ENCODE measurements at regions of chr10 and their contacts with region 1.

Region 1: DNA sequence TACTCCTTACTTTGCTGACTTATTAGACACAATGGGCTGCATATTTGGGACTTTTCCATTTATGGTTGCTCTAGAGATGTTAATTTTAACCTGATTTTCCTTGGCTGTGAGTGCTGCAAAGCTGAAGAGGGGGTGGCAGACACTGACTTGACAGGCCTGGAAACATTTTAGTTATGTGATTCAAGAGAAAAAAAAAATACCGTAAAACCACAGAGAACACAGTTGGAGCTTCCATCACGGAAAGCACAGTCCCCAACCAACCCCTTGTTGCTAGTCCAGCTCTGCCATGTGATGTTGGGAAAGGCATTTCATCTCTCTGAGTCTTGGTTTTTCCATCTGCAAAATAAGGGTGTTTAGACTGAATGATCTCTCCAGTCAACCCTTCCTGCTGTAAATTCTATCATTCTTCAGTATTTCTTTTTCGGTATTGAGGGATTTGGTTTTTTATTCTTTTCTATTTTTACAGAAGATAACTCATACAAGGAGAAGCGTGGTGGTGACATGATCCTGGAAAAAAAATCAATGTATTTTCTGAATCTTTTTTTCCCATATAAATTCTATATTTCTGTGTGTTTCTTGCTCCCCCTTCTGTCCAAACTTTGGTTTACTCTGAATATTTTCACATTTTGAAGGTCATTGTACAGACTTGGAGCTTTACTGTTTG is 246.1 kb downstream of the REEP3 start:
- DNase-seq: peak; percentile 71
- H3K4me3 ChIP-seq: no peak overlapping the region
- H3K27ac ChIP-seq: no peak overlapping the region
- H3K4me1 ChIP-seq: peaks cover 32% of the 10 kb centered on the region
- H3K27me3 ChIP-seq: no peaks in the 10 kb centered on the region
- CTCF ChIP-seq: peak; percentile 70

Region 2: GRCh38 chr10:62594093-62594520 is 1173.2 kb before region 1 on chr10:
- CTCF ChIA-PET with region 1: no interaction called
- POLR2A ChIA-PET with region 1: no interaction called
- intact Hi-C with region 1: loop called (anchors 10 kb)
- DNase-seq: peak; percentile 81
- H3K4me3 ChIP-seq: no peak overlapping the region
- H3K27ac ChIP-seq: no peak overlapping the region
- H3K4me1 ChIP-seq: peaks cover 6% of the 10 kb centered on the region
- H3K27me3 ChIP-seq: no peaks in the 10 kb centered on the region
- CTCF ChIP-seq: peak; percentile 97

Region 3: GRCh38 chr10:63346015-63346441 is 421.2 kb before region 1 on chr10:
- CTCF ChIA-PET with region 1: no interaction called
- POLR2A ChIA-PET with region 1: no interaction called
- intact Hi-C with region 1: no loop called
- DNase-seq: no peak
- H3K4me3 ChIP-seq: no peak overlapping the region
- H3K27ac ChIP-seq: no peak overlapping the region
- H3K4me1 ChIP-seq: no peaks in the 10 kb centered on the region
- H3K27me3 ChIP-seq: no peaks in the 10 kb centered on the region
- CTCF ChIP-seq: no peak

Region 4: DNA sequence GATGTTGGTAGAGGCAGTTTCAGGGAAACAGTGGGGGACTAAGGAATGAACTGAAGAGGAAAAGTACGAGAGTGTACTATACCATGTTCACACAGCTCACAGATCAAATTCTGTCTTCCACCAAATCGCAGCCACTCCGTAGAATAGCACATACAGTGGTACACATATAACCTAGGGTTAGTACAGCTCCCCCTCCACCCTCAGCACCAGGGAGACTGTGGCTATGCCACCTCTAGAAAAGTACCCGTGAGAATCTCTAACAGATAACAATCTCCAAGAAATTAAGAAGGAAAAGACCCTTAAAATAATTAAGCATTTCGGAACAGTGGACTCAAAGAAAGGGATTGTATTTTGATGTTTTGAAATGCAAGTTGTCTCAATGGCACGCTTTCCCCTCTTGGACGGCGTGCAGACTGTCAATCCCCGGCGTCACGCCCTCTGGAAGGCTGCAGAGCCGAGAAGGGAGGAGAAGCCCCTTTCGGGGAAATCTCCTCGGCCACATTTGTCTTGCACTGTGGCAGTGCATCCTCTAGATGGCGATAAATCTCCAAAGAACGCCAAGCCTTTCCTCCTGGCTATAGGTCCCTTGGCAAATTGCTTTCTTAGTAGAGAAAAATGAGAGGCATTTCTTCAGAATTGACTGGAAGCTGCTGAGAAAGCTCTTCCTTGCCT is 98.9 kb after region 1 on chr10:
- CTCF ChIA-PET with region 1: no interaction called
- POLR2A ChIA-PET with region 1: no interaction called
- intact Hi-C with region 1: no loop called
- DNase-seq: peak; percentile 89
- H3K4me3 ChIP-seq: peak overlapping the region; percentile 18
- H3K27ac ChIP-seq: no peak overlapping the region
- H3K4me1 ChIP-seq: peaks cover 5% of the 10 kb centered on the region
- H3K27me3 ChIP-seq: peaks cover 10% of the 10 kb centered on the region
- CTCF ChIP-seq: peak; percentile 87

Region 5: DNA sequence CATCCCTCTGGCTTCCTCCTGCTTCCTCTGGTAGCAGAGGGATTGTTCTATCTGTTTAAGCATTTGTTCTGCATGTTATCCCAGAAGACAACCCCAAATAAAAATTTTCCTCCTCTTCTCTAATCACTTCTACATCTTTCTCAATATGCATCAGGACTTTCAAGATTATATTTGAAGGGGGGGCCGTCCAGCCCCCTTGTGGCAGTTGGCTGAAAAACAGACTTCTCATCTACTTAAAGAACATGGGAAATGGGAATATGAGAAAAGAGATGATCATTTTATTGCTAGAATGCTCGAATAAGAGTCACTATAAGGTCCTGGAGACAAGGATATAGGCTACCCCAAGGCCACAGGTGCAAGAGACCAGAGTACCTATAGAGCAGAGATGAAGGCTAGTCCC is 219.9 kb after region 1 on chr10:
- CTCF ChIA-PET with region 1: no interaction called
- POLR2A ChIA-PET with region 1: no interaction called
- intact Hi-C with region 1: no loop called
- DNase-seq: no peak
- H3K4me3 ChIP-seq: no peak overlapping the region
- H3K27ac ChIP-seq: no peak overlapping the region
- H3K4me1 ChIP-seq: no peaks in the 10 kb centered on the region
- H3K27me3 ChIP-seq: no peaks in the 10 kb centered on the region
- CTCF ChIP-seq: 0 out of 2 replicates have a peak, but pooled peaks have one; percentile 27

Region 6: GRCh38 chr10:64973391-64973790 is 1206.1 kb after region 1 on chr10:
- CTCF ChIA-PET with region 1: no interaction called
- POLR2A ChIA-PET with region 1: no interaction called
- intact Hi-C with region 1: no loop called
- DNase-seq: no peak
- H3K4me3 ChIP-seq: no peak overlapping the region
- H3K27ac ChIP-seq: no peak overlapping the region
- H3K4me1 ChIP-seq: no peaks in the 10 kb centered on the region
- H3K27me3 ChIP-seq: no peaks in the 10 kb centered on the region
- CTCF ChIP-seq: no peak

Measured in A673 (cell line).